Activated CD8-positive, alpha-beta T cell treated with anti-CD3 and anti-CD28 coated beads for 36 hours (primary cell): ENCODE measurements at regions of chr12 and their contacts with region 1.

Region 1: GRCh38 chr12:10304161-10304574 is 3.5 kb upstream of the KLRD1 start:
- DNase-seq: peak; percentile 79
- ATAC-seq: peak; percentile 76
- H3K4me3 Mint-ChIP-seq: peak overlapping the region; percentile 26
- H3K27ac Mint-ChIP-seq: peak overlapping the region; percentile 74
- H3K4me1 Mint-ChIP-seq: peaks cover 66% of the 10 kb centered on the region
- H3K27me3 Mint-ChIP-seq: no peaks in the 10 kb centered on the region
- CTCF ChIP-seq: no peak

Region 2: DNA sequence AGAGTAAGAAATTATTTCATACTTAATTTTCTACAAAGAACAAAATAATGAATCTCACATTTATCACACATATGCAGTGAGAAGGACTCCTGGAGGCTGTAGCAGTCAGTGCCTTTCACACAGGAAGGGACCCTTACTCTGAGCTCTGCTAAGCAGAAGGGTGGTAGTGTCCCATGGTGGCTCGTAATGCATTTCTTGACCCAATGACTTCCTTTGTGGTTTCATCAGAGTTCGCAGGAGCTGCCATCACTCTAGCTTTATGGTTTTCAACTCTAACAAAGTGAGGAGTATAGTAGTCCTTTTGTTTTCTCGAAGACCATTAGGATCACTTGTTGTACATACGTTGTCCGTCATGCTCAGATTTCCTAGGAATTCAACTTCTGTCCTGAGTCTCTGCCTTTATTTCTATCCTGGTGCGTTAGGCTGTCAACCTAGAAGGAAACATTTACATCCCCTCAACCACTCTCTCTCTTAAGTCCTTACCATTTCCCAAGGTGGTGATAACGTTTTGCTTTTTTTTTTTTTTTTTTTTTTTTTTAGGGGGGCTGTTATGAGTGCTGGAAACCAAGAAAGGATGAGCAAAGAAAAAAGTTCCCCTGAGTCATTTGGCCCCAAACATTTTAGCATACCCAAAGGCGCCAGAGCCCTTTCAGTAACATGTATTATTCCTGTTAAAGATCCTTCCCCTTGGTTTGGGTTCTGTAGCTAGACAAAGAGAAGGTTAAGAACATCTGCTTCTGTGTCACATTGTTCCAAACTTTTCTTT is 54.3 kb before region 1 on chr12:
- CTCF ChIA-PET with region 1: interaction called, 4 read pairs
- POLR2A ChIA-PET with region 1: interaction called, 6 read pairs
- intact Hi-C with region 1: loop called (anchors 5 kb)
- DNase-seq: peak; percentile 42
- ATAC-seq: peak; percentile 77
- H3K4me3 Mint-ChIP-seq: peak overlapping the region; percentile 32
- H3K27ac Mint-ChIP-seq: peak overlapping the region; percentile 80
- H3K4me1 Mint-ChIP-seq: peaks cover 28% of the 10 kb centered on the region
- H3K27me3 Mint-ChIP-seq: no peaks in the 10 kb centered on the region
- CTCF ChIP-seq: no peak

Region 3: GRCh38 chr12:10293570-10294227 is 10.5 kb before region 1 on chr12:
- CTCF ChIA-PET with region 1: interaction called, 3 read pairs
- POLR2A ChIA-PET with region 1: interaction called, 19 read pairs
- intact Hi-C with region 1: no loop called
- DNase-seq: peak; percentile 26
- ATAC-seq: peak; percentile 71
- H3K4me3 Mint-ChIP-seq: no peak overlapping the region
- H3K27ac Mint-ChIP-seq: peak overlapping the region; percentile 86
- H3K4me1 Mint-ChIP-seq: peaks cover 61% of the 10 kb centered on the region
- H3K27me3 Mint-ChIP-seq: no peaks in the 10 kb centered on the region
- CTCF ChIP-seq: no peak

Region 4: GRCh38 chr12:10320643-10321042 is 16.5 kb after region 1 on chr12:
- CTCF ChIA-PET with region 1: interaction called, 9 read pairs
- POLR2A ChIA-PET with region 1: interaction called, 6 read pairs
- intact Hi-C with region 1: loop called (anchors 2 kb)
- DNase-seq: peak; percentile 34
- ATAC-seq: peak; percentile 90
- H3K4me3 Mint-ChIP-seq: no peak overlapping the region
- H3K27ac Mint-ChIP-seq: peak overlapping the region; percentile 85
- H3K4me1 Mint-ChIP-seq: peaks cover 47% of the 10 kb centered on the region
- H3K27me3 Mint-ChIP-seq: no peaks in the 10 kb centered on the region
- CTCF ChIP-seq: no peak

Region 5: GRCh38 chr12:10652192-10652591 is 348.0 kb after region 1 on chr12:
- CTCF ChIA-PET with region 1: no interaction called
- POLR2A ChIA-PET with region 1: no interaction called
- intact Hi-C with region 1: no loop called
- DNase-seq: no peak
- ATAC-seq: no peak
- H3K4me3 Mint-ChIP-seq: no peak overlapping the region
- H3K27ac Mint-ChIP-seq: no peak overlapping the region
- H3K4me1 Mint-ChIP-seq: no peaks in the 10 kb centered on the region
- H3K27me3 Mint-ChIP-seq: no peaks in the 10 kb centered on the region
- CTCF ChIP-seq: no peak